Naive thymus-derived CD4-positive, alpha-beta T cell (primary cell): ENCODE measurements at regions of chr1 and their contacts with region 1.

Region 1: GRCh38 chr1:237677979-237678378 is 212.7 kb downstream of the ZP4 start:
- DNase-seq: no peak
- ATAC-seq: no peak
- H3K4me3 ChIP-seq: no peak overlapping the region
- H3K4me3 Mint-ChIP-seq: no peak overlapping the region
- H3K27ac ChIP-seq: no peak overlapping the region
- H3K27ac Mint-ChIP-seq: no peak overlapping the region
- H3K4me1 ChIP-seq: no peaks in the 10 kb centered on the region
- H3K4me1 Mint-ChIP-seq: no peaks in the 10 kb centered on the region
- H3K27me3 ChIP-seq: no peaks in the 10 kb centered on the region
- H3K27me3 Mint-ChIP-seq: peaks cover 0 to 5% (median 0%) of the 10 kb centered on the region in 5 donors

Region 2: DNA sequence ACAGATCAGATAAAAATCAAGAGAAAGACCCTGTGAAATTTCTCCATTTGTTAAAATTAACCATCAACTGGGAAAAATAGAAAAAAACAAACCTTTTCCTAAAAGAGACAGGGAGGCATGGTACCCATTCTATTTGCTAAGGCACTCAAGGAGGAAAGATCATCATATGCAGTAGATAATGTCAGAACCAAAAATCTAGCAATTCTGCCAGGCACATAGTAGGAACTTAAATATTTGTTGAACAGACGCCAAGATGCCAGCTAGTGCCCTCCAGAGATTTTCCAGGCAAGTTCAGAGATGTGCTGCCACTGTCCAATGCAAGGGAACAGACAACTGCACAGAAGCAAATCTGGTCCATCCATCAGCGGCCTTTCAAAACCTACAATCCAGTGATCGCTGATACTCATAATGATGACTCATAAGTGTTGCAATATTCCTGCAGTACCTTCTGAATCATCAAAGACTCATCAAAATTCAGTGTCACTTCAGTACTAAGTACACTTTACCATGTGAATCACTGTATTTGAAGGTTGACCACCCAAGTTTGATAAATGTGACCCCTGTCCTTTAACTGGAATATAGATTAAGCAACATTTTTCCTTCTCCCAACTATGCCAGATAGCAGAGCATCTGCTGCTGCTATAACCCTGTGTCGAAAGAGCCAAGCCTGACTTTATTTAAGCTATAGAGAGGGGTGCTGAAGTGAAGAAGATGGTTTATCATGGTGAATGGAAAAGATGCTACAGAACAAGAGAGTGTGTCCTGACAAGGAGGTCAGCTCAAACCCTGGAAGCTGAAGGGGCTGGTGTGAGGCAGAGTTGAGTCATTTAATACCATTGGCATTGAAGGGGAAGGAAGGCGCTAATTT is 772.9 kb before region 1 on chr1:
- CTCF ChIA-PET with region 1: no interaction called
- POLR2A ChIA-PET with region 1: no interaction called
- intact Hi-C with region 1: no loop called
- DNase-seq: no peak
- ATAC-seq: peak; percentile 59
- H3K4me3 ChIP-seq: no peak overlapping the region
- H3K4me3 Mint-ChIP-seq: peak overlapping the region in 1 of 10 donors; percentile 8
- H3K27ac ChIP-seq: no peak overlapping the region
- H3K27ac Mint-ChIP-seq: peak overlapping the region in 2 of 9 donors; percentile 43 to 50
- H3K4me1 ChIP-seq: no peaks in the 10 kb centered on the region
- H3K4me1 Mint-ChIP-seq: peaks cover 0 to 3% (median 0%) of the 10 kb centered on the region in 7 donors
- H3K27me3 ChIP-seq: no peaks in the 10 kb centered on the region
- H3K27me3 Mint-ChIP-seq: no peaks in the 10 kb centered on the region

Region 3: DNA sequence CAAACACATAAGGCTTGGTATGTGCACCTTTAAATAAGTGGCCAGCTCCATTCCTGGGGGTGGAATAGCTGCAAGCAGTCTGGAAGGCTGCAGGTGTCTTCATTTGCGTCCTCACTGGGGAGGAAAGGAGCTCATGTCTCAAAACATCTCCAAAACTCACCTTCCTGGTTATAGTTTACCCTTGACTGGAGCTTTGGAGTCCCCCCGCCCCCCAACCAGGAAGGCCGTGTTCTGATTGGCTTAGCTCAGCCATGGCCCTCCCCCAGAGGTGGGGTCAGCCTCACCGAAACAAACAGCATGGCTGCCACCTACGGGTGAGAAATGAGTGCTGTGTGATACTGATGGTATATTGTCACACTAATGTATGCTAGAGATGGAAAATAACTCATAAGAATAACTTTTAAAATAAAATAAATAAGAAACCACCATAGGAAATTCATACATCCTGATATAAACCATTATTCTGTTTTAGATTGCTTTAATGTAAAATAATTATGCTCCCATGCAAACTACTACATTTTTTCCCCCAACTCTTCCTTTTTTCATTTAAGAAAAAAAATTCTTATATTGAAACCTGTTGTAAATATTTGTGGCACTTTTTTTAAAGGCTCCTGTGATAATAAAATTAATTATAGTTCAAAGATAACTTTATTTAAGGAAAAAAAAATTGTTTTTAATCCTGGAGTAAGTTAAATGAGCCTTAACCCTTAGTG is 121.9 kb after region 1 on chr1:
- CTCF ChIA-PET with region 1: no interaction called
- POLR2A ChIA-PET with region 1: no interaction called
- intact Hi-C with region 1: loop called in 1 of 2 experiments (anchors 5 kb)
- DNase-seq: peak in 1 of 9 donors; percentile 3
- ATAC-seq: peak; percentile 66
- H3K4me3 ChIP-seq: no peak overlapping the region
- H3K4me3 Mint-ChIP-seq: no peak overlapping the region
- H3K27ac ChIP-seq: no peak overlapping the region
- H3K27ac Mint-ChIP-seq: no peak overlapping the region
- H3K4me1 ChIP-seq: no peaks in the 10 kb centered on the region
- H3K4me1 Mint-ChIP-seq: no peaks in the 10 kb centered on the region
- H3K27me3 ChIP-seq: no peaks in the 10 kb centered on the region
- H3K27me3 Mint-ChIP-seq: peaks cover 0 to 8% (median 5%) of the 10 kb centered on the region in 5 donors